ENCODE measurements at regions of chr1 and their contacts with region 1.

Region 1: DNA sequence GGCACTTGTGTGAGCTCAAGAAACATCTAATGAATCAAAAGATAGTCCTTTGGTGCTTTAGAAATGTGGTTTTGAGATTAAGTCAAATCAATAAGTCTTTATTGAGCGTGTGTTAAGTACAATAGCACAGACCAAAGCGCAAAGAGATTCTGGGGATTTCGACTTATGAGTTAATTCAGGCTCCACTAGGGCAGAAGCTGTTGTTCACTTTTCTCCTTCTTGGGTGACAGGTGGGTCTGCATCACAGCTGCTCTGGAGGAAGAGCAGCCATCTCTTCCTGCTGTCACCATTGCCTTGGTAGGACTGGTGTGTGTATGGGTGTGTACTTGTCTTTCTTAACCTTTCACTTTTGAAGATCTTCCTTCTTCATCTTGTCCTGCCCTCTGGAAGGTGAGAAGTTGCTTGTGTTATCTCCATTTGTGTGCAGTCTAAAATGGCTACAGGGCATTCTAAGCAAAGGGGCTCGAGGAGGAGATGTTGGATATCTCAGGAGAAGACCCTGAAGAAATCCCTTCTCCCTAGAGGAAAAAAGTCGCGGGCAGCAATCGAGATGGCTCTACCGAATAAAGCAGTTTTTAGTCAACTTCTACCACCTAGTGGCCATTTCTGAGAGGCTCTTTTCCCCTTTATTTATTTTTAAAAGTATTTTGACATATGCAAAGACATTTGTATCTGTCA is 22.9 kb upstream of the DISC1 start:
- H3K4me3 Mint-ChIP-seq: peak overlapping the region; percentile 76
- H3K27ac Mint-ChIP-seq: peak overlapping the region; percentile 59
- H3K4me1 Mint-ChIP-seq: peaks cover 32% of the 10 kb centered on the region
- H3K27me3 Mint-ChIP-seq: no peaks in the 10 kb centered on the region

Region 2: DNA sequence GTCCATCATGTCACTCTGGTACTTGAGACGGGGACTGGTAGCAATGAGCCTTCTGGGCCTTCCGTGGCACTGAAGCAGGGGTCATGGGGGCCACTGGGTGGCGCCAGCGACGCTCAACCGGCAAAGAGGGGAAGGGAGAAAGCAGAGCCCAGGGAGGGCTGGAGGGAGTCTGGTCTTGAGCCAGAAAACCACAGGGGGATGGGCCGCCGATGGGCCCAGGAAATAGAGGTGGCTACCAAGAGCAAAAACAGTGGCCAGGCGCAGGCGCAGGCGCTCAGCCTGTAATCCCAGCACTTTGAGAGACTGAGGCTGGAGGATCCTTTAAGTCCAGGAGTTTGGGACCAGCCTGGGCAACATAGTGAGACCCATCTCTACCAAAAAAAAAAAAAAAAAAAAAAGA is 287.9 kb before region 1 on chr1:
- intact Hi-C with region 1: loop called (anchors 5 kb)
- H3K4me3 Mint-ChIP-seq: no peak overlapping the region
- H3K27ac Mint-ChIP-seq: no peak overlapping the region
- H3K4me1 Mint-ChIP-seq: peaks cover 5% of the 10 kb centered on the region
- H3K27me3 Mint-ChIP-seq: peaks cover 4% of the 10 kb centered on the region

Region 3: GRCh38 chr1:231357831-231358354 is 245.8 kb before region 1 on chr1:
- intact Hi-C with region 1: loop called (anchors 1 kb)
- H3K4me3 Mint-ChIP-seq: no peak overlapping the region
- H3K27ac Mint-ChIP-seq: no peak overlapping the region
- H3K4me1 Mint-ChIP-seq: peaks cover 16% of the 10 kb centered on the region
- H3K27me3 Mint-ChIP-seq: no peaks in the 10 kb centered on the region

Region 4: DNA sequence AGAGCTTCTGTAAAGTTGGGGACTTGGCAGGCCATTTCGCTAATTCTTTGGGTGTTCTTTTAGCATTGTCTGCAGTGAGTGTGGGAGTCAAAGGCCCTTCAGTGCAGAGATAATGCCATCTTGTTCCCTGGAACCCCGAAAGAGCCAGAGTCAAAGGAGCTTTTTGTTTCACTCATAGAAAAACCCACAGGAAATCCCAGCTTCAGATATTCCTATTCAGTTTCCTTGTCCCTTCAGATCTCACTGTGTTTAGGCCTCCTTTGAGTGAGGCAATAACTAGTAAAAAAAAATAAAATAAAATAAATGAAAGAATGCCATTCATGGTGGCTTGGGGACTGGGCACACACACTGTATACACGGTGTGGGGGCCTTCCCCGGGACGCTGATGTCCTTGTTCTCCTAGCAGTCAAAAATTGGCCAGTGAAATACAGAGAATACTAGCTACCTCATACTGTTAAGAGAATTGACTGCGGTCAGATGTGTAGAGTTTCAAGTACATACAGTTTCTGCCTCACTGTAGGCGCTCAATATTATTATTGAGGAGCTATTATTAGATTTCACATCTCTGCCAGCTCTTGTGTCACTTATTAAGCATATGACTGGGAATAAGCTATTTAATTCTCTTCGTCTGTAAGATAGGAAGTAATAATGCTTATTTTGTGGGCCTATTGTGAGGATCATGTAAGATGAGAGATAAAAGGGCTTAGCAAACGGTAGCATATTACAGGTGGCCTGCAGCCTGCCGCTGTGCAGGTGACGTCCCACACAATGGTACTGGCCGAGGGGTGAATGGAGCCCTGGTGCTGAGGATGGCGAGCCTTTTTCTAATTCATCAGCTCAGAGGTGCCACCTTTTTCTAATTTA is 39.6 kb after region 1 on chr1:
- intact Hi-C with region 1: no loop called
- H3K4me3 Mint-ChIP-seq: no peak overlapping the region
- H3K27ac Mint-ChIP-seq: no peak overlapping the region
- H3K4me1 Mint-ChIP-seq: peaks cover 29% of the 10 kb centered on the region
- H3K27me3 Mint-ChIP-seq: no peaks in the 10 kb centered on the region